Aorta (tissue), 5 donors: ENCODE measurements at regions of chr12 and their contacts with region 1.

Region 1: DNA sequence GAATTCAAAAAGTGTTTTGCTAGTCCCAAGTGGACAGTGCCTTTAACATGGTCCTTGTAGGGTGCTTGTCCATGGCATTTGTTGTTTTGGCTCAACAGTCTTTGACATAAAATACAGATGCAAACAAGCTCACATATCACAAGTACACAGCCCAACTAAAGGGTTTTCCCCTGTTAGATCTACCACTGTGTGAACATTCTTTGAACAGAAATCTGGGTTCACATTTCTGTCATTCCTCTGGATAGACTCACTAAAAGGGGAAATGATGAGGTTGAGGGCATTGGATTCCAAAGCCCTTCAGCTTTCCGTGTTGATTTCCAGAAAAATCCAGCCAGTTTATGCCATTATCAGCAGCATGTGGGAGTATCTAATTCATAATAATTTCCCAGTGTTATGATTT is 54.1 kb downstream of the EP400 start:
- DNase-seq: no peak
- ATAC-seq: no peak
- H3K4me3 ChIP-seq: no peak overlapping the region
- H3K27ac ChIP-seq: no peak overlapping the region
- H3K4me1 ChIP-seq: no peaks in the 10 kb centered on the region
- H3K27me3 ChIP-seq: no peaks in the 10 kb centered on the region

Region 2: DNA sequence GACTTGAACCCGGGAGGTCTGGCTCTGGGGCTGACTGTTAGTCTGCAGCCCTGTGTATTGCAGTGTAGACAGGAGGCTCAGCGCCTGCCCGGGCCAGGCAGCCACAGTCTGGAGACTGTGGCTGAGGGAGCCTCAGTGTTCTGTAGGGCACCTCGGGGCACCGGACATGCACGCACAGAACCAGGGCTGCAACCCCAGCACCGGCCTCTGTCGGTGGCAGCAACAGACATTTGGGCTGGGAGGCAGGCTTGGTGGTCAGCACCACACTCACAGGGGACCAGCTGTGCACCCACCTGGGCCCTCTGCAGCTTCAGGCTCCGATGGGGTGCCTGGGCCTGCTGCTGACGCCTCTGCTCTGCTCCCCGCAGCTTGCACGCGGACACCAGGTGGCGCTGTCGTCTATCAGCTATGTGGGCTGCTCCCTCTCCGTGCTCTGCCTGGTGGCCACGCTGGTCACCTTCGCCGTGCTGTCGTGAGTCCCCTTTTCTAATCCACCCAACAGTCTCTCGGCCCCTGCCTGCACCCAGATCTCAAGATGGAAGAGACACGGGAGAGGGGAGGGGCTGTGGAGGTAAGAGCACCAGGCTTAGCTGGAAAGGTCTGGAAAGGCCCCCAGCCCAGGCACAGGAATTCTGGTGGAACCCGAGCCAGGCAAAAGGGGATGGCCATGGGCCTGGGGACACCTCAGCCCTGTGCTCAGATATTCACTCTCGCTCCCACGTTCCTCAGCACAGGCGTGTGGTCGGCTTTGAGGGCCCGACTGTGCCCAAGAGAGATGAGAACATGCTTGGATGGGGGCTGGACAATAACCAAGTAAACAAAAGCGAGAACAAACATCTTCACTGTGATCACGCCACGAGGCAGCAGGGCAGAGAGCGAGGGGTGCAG is 899.1 kb before region 1 on chr12:
- intact Hi-C with region 1: loop called in 1 of 2 experiments (anchors 10 kb)
- DNase-seq: peak; percentile 90 to 95
- ATAC-seq: peak; percentile 87
- H3K4me3 ChIP-seq: no peak overlapping the region
- H3K27ac ChIP-seq: no peak overlapping the region
- H3K4me1 ChIP-seq: no peaks in the 10 kb centered on the region
- H3K27me3 ChIP-seq: no peaks in the 10 kb centered on the region

Region 3: DNA sequence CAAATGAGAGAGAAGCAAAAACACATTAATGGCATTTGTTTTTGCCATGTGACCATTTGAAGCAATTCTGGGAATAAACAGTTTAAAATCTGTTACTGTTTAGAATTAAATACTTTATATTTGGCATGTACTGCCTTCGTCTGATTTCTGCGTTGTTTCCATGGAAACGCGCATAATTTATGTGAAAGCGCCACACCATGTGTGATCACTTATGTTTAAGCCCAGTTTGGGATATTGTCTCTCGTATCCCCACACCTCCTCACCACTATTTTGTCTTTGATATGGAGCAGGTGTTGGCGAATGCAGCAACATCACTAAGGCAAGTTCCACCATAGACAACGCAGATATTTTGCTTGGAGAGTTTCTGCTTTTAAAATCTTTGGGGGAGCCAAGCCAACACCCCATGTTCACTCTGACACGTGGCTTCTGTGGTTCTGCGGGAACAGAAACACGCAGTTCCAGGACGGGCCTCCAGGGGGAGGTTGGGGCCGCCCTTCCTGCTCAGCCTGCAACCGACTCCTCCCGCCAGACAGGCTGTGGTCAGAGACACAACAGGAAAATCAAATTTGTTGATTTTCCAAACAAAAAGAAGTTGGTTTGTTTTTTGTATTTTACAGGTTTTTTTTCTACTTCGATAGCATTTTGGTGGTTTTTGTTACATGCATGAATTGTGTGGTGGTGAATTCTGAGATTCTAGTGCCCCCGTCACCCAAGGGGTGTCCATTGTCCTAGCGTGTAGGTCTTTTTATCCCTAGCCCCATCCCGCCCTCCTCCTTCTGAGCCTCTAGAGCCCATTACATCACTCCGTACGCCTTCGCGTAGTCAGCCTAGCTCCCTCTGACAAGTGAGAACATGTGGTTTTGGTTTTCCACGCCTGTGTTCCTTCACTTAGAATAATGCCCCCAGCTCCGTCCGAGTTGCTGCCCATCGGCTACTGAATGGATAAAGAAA is 394.8 kb before region 1 on chr12:
- intact Hi-C with region 1: loop called in 1 of 2 experiments (anchors 10 kb)
- DNase-seq: peak; percentile 80 to 92
- ATAC-seq: peak; percentile 85
- H3K4me3 ChIP-seq: no peak overlapping the region
- H3K27ac ChIP-seq: no peak overlapping the region
- H3K4me1 ChIP-seq: no peaks in the 10 kb centered on the region
- H3K27me3 ChIP-seq: no peaks in the 10 kb centered on the region

Region 4: DNA sequence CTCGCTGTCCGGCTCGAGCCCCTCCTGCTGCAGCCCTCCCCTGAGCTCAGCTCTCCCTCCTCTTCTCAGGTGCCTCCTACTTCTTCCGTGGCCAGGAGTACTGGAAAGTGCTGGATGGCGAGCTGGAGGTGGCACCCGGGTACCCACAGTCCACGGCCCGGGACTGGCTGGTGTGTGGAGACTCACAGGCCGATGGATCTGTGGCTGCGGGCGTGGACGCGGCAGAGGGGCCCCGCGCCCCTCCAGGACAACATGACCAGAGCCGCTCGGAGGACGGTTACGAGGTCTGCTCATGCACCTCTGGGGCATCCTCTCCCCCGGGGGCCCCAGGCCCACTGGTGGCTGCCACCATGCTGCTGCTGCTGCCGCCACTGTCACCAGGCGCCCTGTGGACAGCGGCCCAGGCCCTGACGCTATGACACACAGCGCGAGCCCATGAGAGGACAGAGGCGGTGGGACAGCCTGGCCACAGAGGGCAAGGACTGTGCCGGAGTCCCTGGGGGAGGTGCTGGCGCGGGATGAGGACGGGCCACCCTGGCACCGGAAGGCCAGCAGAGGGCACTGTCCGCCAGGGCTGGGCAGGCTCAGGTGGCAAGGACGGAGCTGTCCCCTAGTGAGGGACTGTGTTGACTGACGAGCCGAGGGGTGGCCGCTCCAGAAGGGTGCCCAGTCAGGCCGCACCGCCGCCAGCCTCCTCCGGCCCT is 152.8 kb before region 1 on chr12:
- intact Hi-C with region 1: loop called in 1 of 2 experiments (anchors 1 kb)
- DNase-seq: peak in 1 of 2 donors; percentile 77
- ATAC-seq: peak; percentile 74
- H3K4me3 ChIP-seq: no peak overlapping the region
- H3K27ac ChIP-seq: no peak overlapping the region
- H3K4me1 ChIP-seq: no peaks in the 10 kb centered on the region
- H3K27me3 ChIP-seq: no peaks in the 10 kb centered on the region

Region 5: GRCh38 chr12:132153501-132154340 is 149.9 kb after region 1 on chr12:
- intact Hi-C with region 1: no loop called
- DNase-seq: peak; percentile 69 to 88
- ATAC-seq: peak; percentile 91
- H3K4me3 ChIP-seq: no peak overlapping the region
- H3K27ac ChIP-seq: no peak overlapping the region
- H3K4me1 ChIP-seq: no peaks in the 10 kb centered on the region
- H3K27me3 ChIP-seq: no peaks in the 10 kb centered on the region